Caco-2 (cell line): ENCODE measurements at regions of chr4 and their contacts with region 1.

Region 1: DNA sequence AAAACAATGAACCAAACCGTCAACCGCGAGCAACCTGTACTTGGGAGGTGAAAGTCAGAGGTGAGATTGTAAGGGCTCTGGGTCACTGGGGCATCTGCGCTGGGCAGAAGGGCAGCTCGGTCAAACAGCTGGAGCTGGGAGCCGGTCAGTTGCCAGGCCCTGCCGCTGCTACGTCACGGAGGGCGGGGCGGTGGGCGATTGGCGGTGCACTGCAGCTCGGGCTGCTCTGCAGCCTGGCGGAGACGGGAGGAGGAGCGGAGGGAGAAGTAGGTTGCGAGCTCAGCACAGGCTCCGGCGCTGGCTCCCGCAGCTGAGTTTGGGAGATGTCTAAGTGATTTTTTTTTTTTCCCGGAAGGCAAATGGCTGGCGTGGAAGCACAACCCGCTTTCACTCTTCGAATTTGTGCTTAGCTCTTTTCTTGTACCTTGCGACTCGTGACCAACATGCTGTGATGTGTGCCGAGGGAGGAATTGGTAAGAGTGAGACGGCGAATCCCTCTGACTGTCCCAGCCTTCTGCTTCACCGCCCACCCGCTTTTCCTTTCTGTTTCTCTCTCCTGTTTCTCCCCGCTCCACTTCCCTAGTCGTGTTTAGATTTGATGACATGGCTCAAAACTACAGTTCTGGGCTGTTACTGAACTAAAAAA is at the start of gene ATP10D:
- DNase-seq: peak; percentile 92 to 95
- H3K4me3 ChIP-seq: peak within 1 kb of the TSS; percentile 44
- H3K4me3 Mint-ChIP-seq: peak within 1 kb of the TSS; percentile 100
- H3K27ac Mint-ChIP-seq: peak within 1 kb of the TSS; percentile 99
- H3K4me1 ChIP-seq: peaks cover 18% of the 10 kb centered on the region
- H3K4me1 Mint-ChIP-seq: no peaks in the 10 kb centered on the region
- H3K27me3 ChIP-seq: no peaks in the 10 kb centered on the region
- H3K27me3 Mint-ChIP-seq: no peaks in the 10 kb centered on the region
- CTCF ChIP-seq: peak in 1 of 2 experiments; percentile 10
- total RNA-seq, gene ATP10D: 44.5 and 50.9 TPM in 2 replicates

Region 2: GRCh38 chr4:47463235-47463956 is 21.8 kb before region 1 on chr4 and contains the start of gene COMMD8:
- CTCF ChIA-PET with region 1: interaction called, 24 read pairs
- POLR2A ChIA-PET with region 1: interaction called, 20 read pairs
- intact Hi-C with region 1: loop called (anchors 1 kb)
- DNase-seq: peak; percentile 96 to 97
- H3K4me3 ChIP-seq: peak within 1 kb of the TSS; percentile 67
- H3K4me3 Mint-ChIP-seq: peak within 1 kb of the TSS; percentile 87
- H3K27ac Mint-ChIP-seq: peak within 1 kb of the TSS; percentile 85
- H3K4me1 ChIP-seq: peaks cover 7% of the 10 kb centered on the region
- H3K4me1 Mint-ChIP-seq: peaks cover 20% of the 10 kb centered on the region
- H3K27me3 ChIP-seq: no peaks in the 10 kb centered on the region
- H3K27me3 Mint-ChIP-seq: no peaks in the 10 kb centered on the region
- CTCF ChIP-seq: peak; percentile 4 to 14
- total RNA-seq, gene COMMD8: 34.9 and 38.8 TPM in 2 replicates

Region 3: GRCh38 chr4:47469951-47470350 is 15.2 kb before region 1 on chr4:
- CTCF ChIA-PET with region 1: interaction called, 23 read pairs
- POLR2A ChIA-PET with region 1: interaction called, 11 read pairs
- intact Hi-C with region 1: loop called (anchors 1 kb)
- DNase-seq: no peak
- H3K4me3 ChIP-seq: no peak overlapping the region
- H3K4me3 Mint-ChIP-seq: no peak overlapping the region
- H3K27ac Mint-ChIP-seq: no peak overlapping the region
- H3K4me1 ChIP-seq: peaks cover 61% of the 10 kb centered on the region
- H3K4me1 Mint-ChIP-seq: peaks cover 34% of the 10 kb centered on the region
- H3K27me3 ChIP-seq: no peaks in the 10 kb centered on the region
- H3K27me3 Mint-ChIP-seq: no peaks in the 10 kb centered on the region
- CTCF ChIP-seq: no peak

Region 4: DNA sequence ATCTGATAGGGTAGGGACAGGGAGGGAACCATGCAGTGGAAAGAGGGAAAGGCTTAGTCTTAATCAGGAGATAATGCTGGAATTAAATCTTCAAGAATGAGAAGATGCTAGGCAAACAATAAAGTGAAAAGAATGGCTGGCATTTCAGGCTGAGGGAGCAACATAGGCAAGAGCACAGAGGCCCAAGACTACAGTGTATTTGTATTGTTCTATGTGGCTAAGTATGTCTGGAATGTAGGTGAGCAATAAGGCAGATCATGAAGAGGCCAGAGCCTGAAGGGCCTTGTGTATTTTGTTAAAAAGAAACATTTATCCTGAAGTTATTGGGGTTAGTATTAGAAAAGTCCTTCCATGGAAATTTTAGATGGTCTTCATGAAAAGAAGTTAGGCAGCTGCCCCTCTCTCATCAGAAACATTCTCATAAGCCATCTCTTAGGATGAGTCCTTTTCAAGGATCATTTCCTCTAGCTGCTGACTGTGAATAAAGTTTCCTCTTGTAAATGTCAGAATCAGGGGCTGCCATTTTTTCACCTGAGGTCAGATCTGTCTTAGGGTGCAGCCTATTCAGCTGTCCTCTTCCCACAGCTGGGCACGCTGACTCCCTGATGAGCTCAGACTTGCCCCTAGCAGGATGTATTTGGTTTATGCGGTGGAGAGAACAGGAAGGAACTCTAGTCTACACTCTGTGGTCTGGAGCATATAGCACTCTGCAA is 46.2 kb after region 1 on chr4:
- CTCF ChIA-PET with region 1: no interaction called
- POLR2A ChIA-PET with region 1: no interaction called
- intact Hi-C with region 1: loop called (anchors 5 kb)
- DNase-seq: peak; percentile 44 to 48
- H3K4me3 ChIP-seq: no peak overlapping the region
- H3K4me3 Mint-ChIP-seq: peak overlapping the region; percentile 3
- H3K27ac Mint-ChIP-seq: peak overlapping the region; percentile 76
- H3K4me1 ChIP-seq: peaks cover 28% of the 10 kb centered on the region
- H3K4me1 Mint-ChIP-seq: peaks cover 28% of the 10 kb centered on the region
- H3K27me3 ChIP-seq: no peaks in the 10 kb centered on the region
- H3K27me3 Mint-ChIP-seq: no peaks in the 10 kb centered on the region
- CTCF ChIP-seq: no peak

Region 5: GRCh38 chr4:47598320-47598719 is 113.2 kb after region 1 on chr4:
- CTCF ChIA-PET with region 1: no interaction called
- POLR2A ChIA-PET with region 1: no interaction called
- intact Hi-C with region 1: no loop called
- DNase-seq: no peak
- H3K4me3 ChIP-seq: no peak overlapping the region
- H3K4me3 Mint-ChIP-seq: no peak overlapping the region
- H3K27ac Mint-ChIP-seq: no peak overlapping the region
- H3K4me1 ChIP-seq: no peaks in the 10 kb centered on the region
- H3K4me1 Mint-ChIP-seq: no peaks in the 10 kb centered on the region
- H3K27me3 ChIP-seq: no peaks in the 10 kb centered on the region
- H3K27me3 Mint-ChIP-seq: no peaks in the 10 kb centered on the region
- CTCF ChIP-seq: no peak